ENCODE measurements at regions of chr12 and their contacts with region 1.

Region 1: GRCh38 chr12:107760809-107761501 is at the start of gene PRDM4:
- DNase-seq: peak; percentile 95
- ATAC-seq: peak; percentile 93
- H3K4me3 Mint-ChIP-seq: peak within 1 kb of the TSS; percentile 92
- H3K27ac Mint-ChIP-seq: peak within 1 kb of the TSS; percentile 91
- H3K4me1 Mint-ChIP-seq: peaks cover 27% of the 10 kb centered on the region
- H3K27me3 Mint-ChIP-seq: no peaks in the 10 kb centered on the region
- total RNA-seq, gene PRDM4: 27.5 to 29.7 TPM

Region 2: GRCh38 chr12:106302401-106303201 is 1458.4 kb before region 1 on chr12 and contains the start of gene TCP11L2:
- CTCF ChIA-PET with region 1: no interaction called
- POLR2A ChIA-PET with region 1: no interaction called
- intact Hi-C with region 1: loop called in 1 of 2 experiments (anchors 2 kb)
- DNase-seq: peak; percentile 94
- ATAC-seq: peak; percentile 67
- H3K4me3 Mint-ChIP-seq: peak within 1 kb of the TSS; percentile 78
- H3K27ac Mint-ChIP-seq: peak within 1 kb of the TSS; percentile 99
- H3K4me1 Mint-ChIP-seq: peaks cover 59% of the 10 kb centered on the region
- H3K27me3 Mint-ChIP-seq: no peaks in the 10 kb centered on the region
- total RNA-seq, gene TCP11L2: 8.6 to 11.8 TPM

Region 3: GRCh38 chr12:106774005-106774807 is 986.7 kb before region 1 on chr12 and contains the start of gene RIC8B:
- CTCF ChIA-PET with region 1: no interaction called
- POLR2A ChIA-PET with region 1: no interaction called
- intact Hi-C with region 1: loop called in 1 of 2 experiments (anchors 2 kb)
- DNase-seq: peak; percentile 89
- ATAC-seq: peak; percentile 92
- H3K4me3 Mint-ChIP-seq: peak within 1 kb of the TSS; percentile 95
- H3K27ac Mint-ChIP-seq: peak within 1 kb of the TSS; percentile 98
- H3K4me1 Mint-ChIP-seq: peaks cover 32% of the 10 kb centered on the region
- H3K27me3 Mint-ChIP-seq: no peaks in the 10 kb centered on the region
- total RNA-seq, gene RIC8B: 10.7 to 11.3 TPM

Region 4: DNA sequence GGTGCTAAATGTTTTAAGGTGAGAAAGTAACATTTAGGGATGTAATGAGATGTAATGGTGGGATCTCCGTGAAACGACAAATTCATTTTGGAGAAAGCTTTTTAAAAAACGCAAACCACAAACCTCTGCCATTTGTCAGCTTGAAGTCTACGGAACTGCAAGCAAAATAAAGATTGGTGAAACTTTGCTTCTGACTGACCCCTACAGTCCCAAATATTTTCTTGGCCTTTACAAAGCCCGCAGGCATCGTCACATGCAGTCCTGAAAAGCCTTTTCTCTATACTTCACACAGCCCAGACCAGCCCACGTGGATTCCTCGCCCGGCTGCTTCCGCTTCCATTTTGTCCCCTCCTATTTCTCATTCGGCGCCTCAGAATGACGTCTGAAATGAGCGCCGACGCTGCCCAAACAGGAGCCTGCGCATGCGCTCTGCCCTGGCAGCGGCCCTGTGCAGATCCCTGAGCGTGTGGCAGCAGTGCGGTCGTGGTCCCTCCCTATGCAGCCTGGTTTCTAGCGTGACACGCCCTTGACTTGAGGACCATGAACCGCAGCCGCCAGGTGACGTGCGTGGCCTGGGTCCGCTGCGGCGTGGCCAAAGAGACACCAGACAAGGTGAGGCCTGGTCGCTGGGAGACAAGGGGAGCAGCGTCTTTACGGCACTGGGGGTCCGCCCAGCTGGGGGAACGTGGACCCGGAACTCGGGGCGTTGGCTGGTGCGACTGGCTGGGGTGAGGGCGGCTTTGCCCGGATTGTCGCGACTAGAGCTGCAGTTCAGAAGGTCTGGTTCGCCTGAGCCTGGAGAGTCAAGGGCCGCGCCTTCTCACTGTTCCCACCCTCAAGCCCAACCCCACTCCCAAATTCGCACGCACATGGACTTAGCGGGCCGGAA is 75.4 kb before region 1 on chr12 and contains the start of gene PWP1:
- CTCF ChIA-PET with region 1: interaction called, 4 read pairs
- POLR2A ChIA-PET with region 1: no interaction called
- intact Hi-C with region 1: loop called (anchors 1 kb)
- DNase-seq: peak; percentile 97
- ATAC-seq: peak; percentile 92
- H3K4me3 Mint-ChIP-seq: peak within 1 kb of the TSS; percentile 94
- H3K27ac Mint-ChIP-seq: peak within 1 kb of the TSS; percentile 94
- H3K4me1 Mint-ChIP-seq: peaks cover 27% of the 10 kb centered on the region
- H3K27me3 Mint-ChIP-seq: no peaks in the 10 kb centered on the region
- total RNA-seq, gene PWP1: 59.5 to 60.0 TPM

Region 5: GRCh38 chr12:107903341-107904061 is 142.5 kb after region 1 on chr12:
- CTCF ChIA-PET with region 1: no interaction called
- POLR2A ChIA-PET with region 1: no interaction called
- intact Hi-C with region 1: loop called in 1 of 2 experiments (anchors 1 kb)
- DNase-seq: peak; percentile 81
- ATAC-seq: peak; percentile 93
- H3K4me3 Mint-ChIP-seq: peak overlapping the region; percentile 69
- H3K27ac Mint-ChIP-seq: no peak overlapping the region
- H3K4me1 Mint-ChIP-seq: peaks cover 8% of the 10 kb centered on the region
- H3K27me3 Mint-ChIP-seq: peaks cover 54% of the 10 kb centered on the region

Region 6: GRCh38 chr12:108193917-108194316 is 433.0 kb after region 1 on chr12:
- CTCF ChIA-PET with region 1: no interaction called
- POLR2A ChIA-PET with region 1: no interaction called
- intact Hi-C with region 1: loop called in 1 of 2 experiments (anchors 5 kb)
- DNase-seq: peak; percentile 48
- ATAC-seq: no peak
- H3K4me3 Mint-ChIP-seq: no peak overlapping the region
- H3K27ac Mint-ChIP-seq: no peak overlapping the region
- H3K4me1 Mint-ChIP-seq: no peaks in the 10 kb centered on the region
- H3K27me3 Mint-ChIP-seq: peaks cover 7% of the 10 kb centered on the region

Region 7: GRCh38 chr12:109052414-109053323 is 1291.7 kb after region 1 on chr12 and contains the start of gene USP30:
- CTCF ChIA-PET with region 1: no interaction called
- POLR2A ChIA-PET with region 1: no interaction called
- intact Hi-C with region 1: loop called in 1 of 2 experiments (anchors 2 kb)
- DNase-seq: peak; percentile 91
- ATAC-seq: peak; percentile 70
- H3K4me3 Mint-ChIP-seq: peak within 1 kb of the TSS; percentile 86
- H3K27ac Mint-ChIP-seq: peak within 1 kb of the TSS; percentile 97
- H3K4me1 Mint-ChIP-seq: peaks cover 6% of the 10 kb centered on the region
- H3K27me3 Mint-ChIP-seq: no peaks in the 10 kb centered on the region
- total RNA-seq, gene USP30: 9.2 to 14.5 TPM